PC-3 (cell line): ENCODE measurements at regions of chr3 and their contacts with region 1.

Region 1: DNA sequence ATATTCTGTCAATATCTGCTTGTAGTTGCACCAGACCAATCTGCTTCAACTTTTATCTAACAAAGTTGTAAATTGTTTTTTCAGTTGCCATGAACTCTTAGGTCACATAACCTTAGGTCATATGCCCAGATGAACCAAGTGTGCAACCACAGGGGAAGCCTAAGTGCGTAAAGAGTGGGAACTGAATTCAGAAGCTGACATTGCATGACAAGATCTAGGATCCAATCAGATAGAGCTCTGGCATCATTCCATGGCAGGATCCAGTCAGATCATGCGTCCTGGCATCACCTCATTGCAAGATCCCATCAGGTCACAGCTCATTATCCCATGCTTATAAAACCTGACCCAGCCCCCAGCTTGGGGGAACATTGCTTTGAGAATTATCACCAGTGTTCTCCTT is 18.9 kb upstream of the IFT57 start:
- DNase-seq: no peak
- ATAC-seq: no peak
- H3K4me3 ChIP-seq: no peak overlapping the region
- H3K27ac ChIP-seq: no peak overlapping the region
- H3K4me1 ChIP-seq: 0 out of 2 replicates have a peak, but pooled peaks cover 3% of the 10 kb centered on the region
- H3K27me3 ChIP-seq: no peaks in the 10 kb centered on the region
- CTCF ChIP-seq: no peak

Region 2: DNA sequence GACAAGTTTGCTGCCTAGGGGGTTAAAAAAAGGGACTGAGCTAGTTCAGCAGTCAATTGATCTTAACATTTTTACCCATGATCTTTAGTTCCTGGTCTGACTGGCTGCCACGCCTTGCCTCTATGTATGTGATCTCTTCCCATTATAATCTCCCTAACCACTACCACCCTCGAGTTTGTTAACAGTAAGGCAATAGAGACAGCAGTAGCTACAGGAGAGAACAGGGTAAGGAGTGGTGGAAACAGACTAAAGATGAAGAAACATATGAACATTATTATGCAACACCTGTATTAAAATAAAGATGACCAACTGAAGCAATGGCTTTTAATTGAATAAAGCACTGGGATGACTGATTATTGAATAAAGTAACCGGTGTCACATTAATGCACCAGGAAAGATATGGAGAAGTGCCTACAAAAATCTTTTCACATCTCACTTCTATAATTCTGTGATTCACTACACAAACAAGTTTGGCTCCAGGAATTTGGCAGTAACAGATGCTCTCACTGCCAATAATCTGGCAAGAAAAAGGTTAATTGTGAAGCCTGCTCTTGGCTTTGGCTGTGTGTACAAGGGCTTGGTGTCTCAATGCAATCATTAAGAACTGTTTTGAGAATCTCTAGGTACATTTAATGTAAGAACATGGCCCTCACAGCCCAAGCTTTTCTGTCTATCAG is 150.9 kb after region 1 on chr3:
- CTCF ChIA-PET with region 1: no interaction called
- POLR2A ChIA-PET with region 1: no interaction called
- intact Hi-C with region 1: loop called (anchors 5 kb)
- DNase-seq: peak; percentile 84
- ATAC-seq: peak; percentile 94
- H3K4me3 ChIP-seq: no peak overlapping the region
- H3K27ac ChIP-seq: peak overlapping the region; percentile 48
- H3K4me1 ChIP-seq: peaks cover 17% of the 10 kb centered on the region
- H3K27me3 ChIP-seq: no peaks in the 10 kb centered on the region
- CTCF ChIP-seq: no peak

Region 3: DNA sequence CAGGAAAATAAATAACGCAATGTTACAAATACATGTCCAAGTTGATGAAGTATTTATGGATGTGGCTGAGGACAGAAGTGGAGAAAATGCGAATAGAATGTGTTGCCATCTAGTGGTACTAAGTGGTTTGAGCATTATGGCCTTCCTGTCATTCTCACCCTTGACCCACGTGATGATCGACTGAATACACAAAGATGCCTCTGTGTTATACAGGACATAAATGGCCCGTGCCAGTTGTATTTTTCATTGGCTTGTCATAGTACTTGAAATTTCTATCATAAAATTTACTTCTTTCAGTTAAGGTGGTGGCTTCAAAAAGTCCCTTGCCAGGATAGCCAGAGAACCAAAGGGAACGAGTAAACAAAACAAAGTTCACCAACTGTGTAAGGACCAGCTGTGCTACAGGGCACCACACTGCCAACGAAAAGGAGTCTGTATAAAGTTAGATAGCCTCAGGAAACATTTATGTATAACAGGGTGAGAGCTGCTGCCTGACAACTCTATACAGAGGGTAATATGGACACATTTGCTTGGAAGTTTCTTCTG is 165.6 kb after region 1 on chr3:
- CTCF ChIA-PET with region 1: no interaction called
- POLR2A ChIA-PET with region 1: no interaction called
- intact Hi-C with region 1: loop called (anchors 1 kb)
- DNase-seq: peak; percentile 74
- ATAC-seq: peak; percentile 89
- H3K4me3 ChIP-seq: no peak overlapping the region
- H3K27ac ChIP-seq: no peak overlapping the region
- H3K4me1 ChIP-seq: peaks cover 9% of the 10 kb centered on the region
- H3K27me3 ChIP-seq: no peaks in the 10 kb centered on the region
- CTCF ChIP-seq: peak; percentile 80